Right cardiac atrium (tissue), 5 donors: ENCODE measurements at regions of chr11 and their contacts with region 1.

Region 1: GRCh38 chr11:102293873-102294601 is 23.2 kb upstream of the BIRC3 start:
- DNase-seq: no peak
- ATAC-seq: peak; percentile 62 to 74
- H3K4me3 ChIP-seq: no peak overlapping the region
- H3K27ac ChIP-seq: no peak overlapping the region
- H3K4me1 ChIP-seq: no peaks in the 10 kb centered on the region
- H3K27me3 ChIP-seq: no peaks in the 10 kb centered on the region

Region 2: GRCh38 chr11:101241160-101241795 is 1052.8 kb before region 1 on chr11:
- intact Hi-C with region 1: no loop called
- DNase-seq: peak in 1 of 3 donors; percentile 43
- ATAC-seq: no peak
- H3K4me3 ChIP-seq: no peak overlapping the region
- H3K27ac ChIP-seq: no peak overlapping the region
- H3K4me1 ChIP-seq: no peaks in the 10 kb centered on the region
- H3K27me3 ChIP-seq: no peaks in the 10 kb centered on the region

Region 3: DNA sequence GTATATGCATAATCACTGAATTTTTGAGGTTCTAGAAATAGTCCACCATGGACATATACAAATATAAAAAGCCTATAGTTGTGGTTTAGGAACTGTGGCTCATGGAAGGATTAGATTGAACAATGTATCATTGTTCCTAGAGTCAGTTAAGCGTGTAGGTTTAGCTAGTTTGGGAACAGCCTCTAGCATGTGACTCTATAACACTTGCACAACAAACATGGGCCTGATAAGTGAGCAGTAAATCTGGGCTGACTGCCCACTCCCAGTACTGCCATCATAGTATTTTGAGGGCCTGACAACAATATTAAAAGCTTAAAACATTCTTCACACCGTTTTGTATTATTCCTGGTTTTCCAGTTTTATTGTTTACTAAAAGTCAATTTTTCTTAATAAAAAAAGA is 136.8 kb before region 1 on chr11:
- intact Hi-C with region 1: no loop called
- DNase-seq: peak; percentile 75 to 87 (median 77)
- ATAC-seq: peak; percentile 96
- H3K4me3 ChIP-seq: no peak overlapping the region
- H3K27ac ChIP-seq: no peak overlapping the region
- H3K4me1 ChIP-seq: peaks cover 5% of the 10 kb centered on the region
- H3K27me3 ChIP-seq: no peaks in the 10 kb centered on the region

Region 4: GRCh38 chr11:102341844-102342318 is 47.8 kb after region 1 on chr11:
- intact Hi-C with region 1: loop called in 1 of 4 experiments (anchors 5 kb)
- DNase-seq: peak; percentile 65 to 81 (median 68)
- ATAC-seq: peak; percentile 62 to 66
- H3K4me3 ChIP-seq: no peak overlapping the region
- H3K27ac ChIP-seq: no peak overlapping the region
- H3K4me1 ChIP-seq: no peaks in the 10 kb centered on the region
- H3K27me3 ChIP-seq: no peaks in the 10 kb centered on the region

Region 5: DNA sequence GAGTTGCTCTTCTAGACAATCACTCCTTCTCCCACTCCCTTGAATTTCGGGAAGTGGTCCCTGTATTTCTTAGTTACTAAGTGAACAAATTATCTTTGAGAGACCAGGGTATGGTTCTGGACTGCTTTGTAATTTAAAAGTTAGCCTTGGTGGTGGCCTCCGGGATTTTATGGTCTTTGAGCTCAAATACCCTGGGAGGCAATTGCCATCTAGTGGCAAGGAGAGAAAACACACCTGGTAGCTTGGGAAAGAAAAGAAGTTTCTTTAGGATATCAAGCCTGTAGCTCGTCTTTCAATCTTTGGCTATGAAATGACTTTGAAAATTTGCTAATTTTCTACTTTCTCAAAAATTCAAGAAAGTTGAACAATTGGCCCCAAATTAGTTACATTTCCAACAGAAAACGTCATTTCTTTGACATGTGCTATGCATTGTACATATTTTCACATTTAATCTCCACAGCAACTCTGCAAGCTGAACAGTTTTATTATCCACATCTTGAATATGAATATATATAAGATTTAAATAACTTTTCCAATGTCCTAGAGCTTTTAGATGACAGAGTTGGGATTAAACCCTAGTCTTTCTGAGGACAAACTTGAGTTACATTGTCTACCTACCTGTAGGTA is 372.4 kb after region 1 on chr11:
- intact Hi-C with region 1: loop called in 1 of 4 experiments (anchors 5 kb)
- DNase-seq: no peak
- ATAC-seq: peak; percentile 45 to 57
- H3K4me3 ChIP-seq: no peak overlapping the region
- H3K27ac ChIP-seq: no peak overlapping the region
- H3K4me1 ChIP-seq: no peaks in the 10 kb centered on the region
- H3K27me3 ChIP-seq: no peaks in the 10 kb centered on the region